ENCODE measurements at regions of chr7 and their contacts with region 1.

Region 1: DNA sequence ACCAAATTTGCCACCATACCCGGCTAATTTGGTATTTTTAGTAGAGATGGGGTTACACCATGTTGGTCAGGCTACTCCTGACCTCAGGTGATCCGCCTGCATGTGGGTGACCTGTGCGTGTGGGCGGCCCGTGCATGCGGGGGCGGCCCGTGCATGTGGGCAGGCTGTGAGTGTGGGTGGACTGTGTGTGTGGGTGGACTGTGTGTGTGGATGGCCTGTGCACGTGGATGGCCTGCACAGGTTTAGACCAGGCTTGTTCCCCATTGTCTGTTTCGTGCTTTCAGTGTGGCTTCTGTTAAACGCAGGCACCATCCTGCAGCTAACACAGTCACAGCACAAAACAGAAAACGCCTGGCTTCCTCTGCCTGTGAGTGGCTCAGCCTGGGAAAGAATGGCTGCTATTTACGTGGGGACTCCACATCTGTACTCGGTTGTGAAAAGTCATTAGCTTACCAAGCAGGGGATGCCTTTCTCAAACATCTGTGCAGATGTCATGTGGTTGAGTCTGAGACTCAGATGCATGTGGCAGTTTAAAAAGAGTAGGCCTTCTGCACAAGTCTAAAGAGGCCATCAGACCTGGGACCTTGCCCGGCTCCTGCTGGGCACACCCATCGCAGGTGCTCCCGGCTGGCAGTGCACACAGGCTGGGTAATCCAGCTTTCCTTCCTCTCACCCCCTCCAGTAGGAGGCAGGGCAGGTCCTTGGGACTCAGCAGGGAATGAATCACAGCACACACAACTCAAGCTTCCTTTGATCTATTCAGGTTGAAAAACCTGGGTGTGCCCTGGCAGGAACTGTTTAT is 91.6 kb downstream of the COBL start:
- DNase-seq: peak; percentile 45
- ATAC-seq: peak; percentile 90
- H3K4me3 Mint-ChIP-seq: no peak overlapping the region
- H3K27ac Mint-ChIP-seq: peak overlapping the region; percentile 33; the same call in 1 of the 2 replicates
- H3K4me1 Mint-ChIP-seq: peaks cover 63% of the 10 kb centered on the region
- H3K27me3 Mint-ChIP-seq: no peaks in the 10 kb centered on the region
- CTCF ChIP-seq: no peak

Region 2: GRCh38 chr7:51187941-51188340 is 37.1 kb before region 1 on chr7:
- CTCF ChIA-PET with region 1: interaction called, 25 read pairs
- POLR2A ChIA-PET with region 1: interaction called, 3 read pairs
- DNase-seq: peak; percentile 84
- ATAC-seq: peak; percentile 100
- H3K4me3 Mint-ChIP-seq: no peak overlapping the region
- H3K27ac Mint-ChIP-seq: peak overlapping the region; percentile 89
- H3K4me1 Mint-ChIP-seq: peaks cover 9% of the 10 kb centered on the region
- H3K27me3 Mint-ChIP-seq: no peaks in the 10 kb centered on the region
- CTCF ChIP-seq: no peak; the same call in 1 of the 2 replicates

Region 3: GRCh38 chr7:51237446-51238150 is 12.6 kb after region 1 on chr7:
- CTCF ChIA-PET with region 1: interaction called, 17 read pairs
- POLR2A ChIA-PET with region 1: no interaction called
- DNase-seq: no peak
- ATAC-seq: no peak
- H3K4me3 Mint-ChIP-seq: no peak overlapping the region
- H3K27ac Mint-ChIP-seq: no peak overlapping the region
- H3K4me1 Mint-ChIP-seq: peaks cover 62% of the 10 kb centered on the region
- H3K27me3 Mint-ChIP-seq: no peaks in the 10 kb centered on the region
- CTCF ChIP-seq: no peak

Region 4: GRCh38 chr7:51249184-51249945 is 24.4 kb after region 1 on chr7:
- CTCF ChIA-PET with region 1: interaction called, 11 read pairs
- POLR2A ChIA-PET with region 1: no interaction called
- DNase-seq: no peak
- ATAC-seq: no peak
- H3K4me3 Mint-ChIP-seq: no peak overlapping the region
- H3K27ac Mint-ChIP-seq: peak overlapping the region; percentile 21; the same call in 1 of the 2 replicates
- H3K4me1 Mint-ChIP-seq: peaks cover 15% of the 10 kb centered on the region
- H3K27me3 Mint-ChIP-seq: no peaks in the 10 kb centered on the region
- CTCF ChIP-seq: no peak

Region 5: GRCh38 chr7:51315393-51316261 is 90.6 kb after region 1 on chr7:
- CTCF ChIA-PET with region 1: interaction called, 10 read pairs
- POLR2A ChIA-PET with region 1: no interaction called
- DNase-seq: peak; percentile 67
- ATAC-seq: peak; percentile 33
- H3K4me3 Mint-ChIP-seq: peak overlapping the region; percentile 94
- H3K27ac Mint-ChIP-seq: peak overlapping the region; percentile 28; the same call in 1 of the 2 replicates
- H3K4me1 Mint-ChIP-seq: peaks cover 61% of the 10 kb centered on the region
- H3K27me3 Mint-ChIP-seq: peaks cover 36% of the 10 kb centered on the region
- CTCF ChIP-seq: no peak

Region 6: DNA sequence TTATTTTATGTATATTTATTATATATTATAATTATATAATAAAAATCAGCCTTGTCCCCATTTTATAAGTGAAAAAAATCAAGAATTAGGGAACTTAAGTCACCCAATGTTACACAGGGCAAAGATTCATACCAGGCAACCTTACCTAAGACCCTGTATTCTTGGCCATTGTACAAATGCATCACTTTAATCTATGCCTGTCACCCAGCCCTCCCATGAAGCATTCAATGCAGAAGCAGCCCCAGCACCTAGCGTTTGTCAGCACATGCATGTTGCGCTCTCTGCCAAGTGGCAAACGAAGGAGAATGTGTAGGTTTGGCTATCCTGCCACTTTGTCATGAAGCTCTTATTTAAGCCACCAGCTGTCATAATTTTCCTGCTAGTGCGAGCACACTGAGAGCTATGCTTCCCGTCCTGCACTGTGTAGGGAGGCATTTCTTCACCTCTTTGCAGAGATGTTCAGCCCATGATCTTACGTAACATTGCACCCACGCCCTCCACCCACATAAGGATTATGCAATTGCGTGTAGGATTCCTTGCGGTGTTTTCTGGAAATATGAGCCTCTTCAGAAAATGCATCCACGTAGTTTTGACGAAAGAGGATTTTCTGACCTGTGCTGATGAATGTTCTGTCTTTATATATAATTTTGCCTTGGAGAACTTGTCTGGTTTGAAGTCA is 99.3 kb after region 1 on chr7:
- CTCF ChIA-PET with region 1: interaction called, 10 read pairs
- POLR2A ChIA-PET with region 1: no interaction called
- DNase-seq: no peak
- ATAC-seq: no peak
- H3K4me3 Mint-ChIP-seq: no peak overlapping the region
- H3K27ac Mint-ChIP-seq: peak overlapping the region; percentile 37
- H3K4me1 Mint-ChIP-seq: peaks cover 82% of the 10 kb centered on the region
- H3K27me3 Mint-ChIP-seq: peaks cover 32% of the 10 kb centered on the region
- CTCF ChIP-seq: no peak

Region 7: DNA sequence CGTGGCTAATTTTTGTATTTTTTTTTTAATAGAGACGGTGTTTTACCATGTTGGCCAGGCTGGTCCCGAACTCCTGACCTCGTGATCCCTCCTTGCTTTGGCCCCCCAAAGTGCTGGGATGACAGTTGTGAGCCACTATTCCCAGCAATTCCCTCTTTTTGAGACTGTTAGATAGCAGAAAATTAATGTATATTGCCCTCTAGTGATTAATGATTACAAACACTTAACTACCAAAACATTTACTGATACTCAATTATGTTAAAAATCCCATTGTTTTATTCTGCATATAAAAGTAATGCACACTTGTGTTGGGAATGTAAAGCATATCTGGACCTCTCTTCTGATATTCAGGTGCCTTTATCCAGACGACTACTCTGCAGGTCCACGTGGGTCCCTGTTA is 132.8 kb after region 1 on chr7:
- CTCF ChIA-PET with region 1: interaction called, 11 read pairs
- POLR2A ChIA-PET with region 1: no interaction called
- DNase-seq: no peak
- ATAC-seq: no peak
- H3K4me3 Mint-ChIP-seq: no peak overlapping the region
- H3K27ac Mint-ChIP-seq: no peak overlapping the region
- H3K4me1 Mint-ChIP-seq: peaks cover 20% of the 10 kb centered on the region
- H3K27me3 Mint-ChIP-seq: no peaks in the 10 kb centered on the region; the same call in 1 of the 2 replicates
- CTCF ChIP-seq: no peak